ENCODE measurements at regions of chr11 and their contacts with region 1.

Region 1: GRCh38 chr11:117843666-117844484 is 19.3 kb upstream of the FXYD2 start:
- DNase-seq: peak; percentile 94

Region 2: DNA sequence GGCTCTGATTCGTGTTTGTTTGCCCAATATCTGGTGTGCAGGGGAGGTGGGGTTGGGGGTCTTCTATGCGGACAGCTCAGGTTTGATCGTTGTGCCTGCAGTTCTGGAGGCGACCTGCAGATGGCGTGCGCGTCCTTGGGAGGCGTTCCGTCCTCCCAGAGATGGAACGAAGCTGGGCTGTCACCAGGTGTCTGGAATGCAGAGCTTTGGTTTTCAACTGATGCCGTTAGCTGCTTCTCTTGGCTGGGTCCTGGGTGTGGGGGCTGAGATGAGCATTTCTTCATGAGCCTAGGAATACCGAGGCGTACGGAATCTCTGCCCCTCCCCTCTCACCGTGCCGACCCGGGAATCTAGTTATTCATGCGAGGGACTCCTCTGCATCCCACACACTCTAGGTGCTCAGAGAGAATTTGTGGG is 417.6 kb before region 1 on chr11:
- intact Hi-C with region 1: no loop called
- DNase-seq: peak; percentile 89

Region 3: DNA sequence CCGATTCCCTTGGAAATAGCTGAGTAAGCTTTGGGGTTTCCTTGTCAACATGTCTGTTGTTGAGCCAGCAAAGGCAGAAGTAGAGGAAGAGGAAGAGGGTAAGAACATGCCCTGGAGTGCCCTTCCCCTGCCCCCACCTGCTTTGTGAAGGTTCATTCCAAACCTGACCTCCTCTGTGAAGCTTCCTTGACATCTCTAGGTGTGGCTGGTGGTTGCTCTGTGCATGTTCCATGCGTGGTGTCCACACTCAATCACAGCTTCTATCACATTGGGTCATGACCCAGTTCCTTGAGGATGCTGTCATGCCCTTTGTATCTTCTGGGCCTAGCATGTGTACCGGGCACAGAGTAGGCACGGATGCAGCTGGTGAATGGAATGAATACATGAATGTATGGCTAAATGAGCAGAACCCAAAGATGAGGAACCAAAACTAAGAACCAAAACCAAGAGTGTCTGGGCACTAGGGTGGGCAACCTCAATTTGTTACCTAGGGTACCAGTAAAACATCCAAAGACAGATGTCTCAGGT is 56.3 kb after region 1 on chr11:
- intact Hi-C with region 1: loop called in 1 of 2 experiments (anchors 5 kb)
- DNase-seq: peak; percentile 62

Region 4: GRCh38 chr11:117946842-117947526 is 103.1 kb after region 1 on chr11:
- intact Hi-C with region 1: loop called (anchors 2 kb)
- DNase-seq: peak; percentile 97